Calu3 (cell line): ENCODE measurements at regions of chr14 and their contacts with region 1.

Region 1: GRCh38 chr14:98309591-98309990 is 962.4 kb downstream of the BCL11B start:
- DNase-seq: no peak
- H3K4me3 Mint-ChIP-seq: no peak overlapping the region
- H3K27ac Mint-ChIP-seq: no peak overlapping the region
- H3K4me1 Mint-ChIP-seq: no peaks in the 10 kb centered on the region
- H3K27me3 Mint-ChIP-seq: no peaks in the 10 kb centered on the region
- CTCF ChIP-seq: no peak

Region 2: GRCh38 chr14:98665007-98665406 is 355.4 kb after region 1 on chr14:
- CTCF ChIA-PET with region 1: interaction called, 16 read pairs
- intact Hi-C with region 1: no loop called
- DNase-seq: no peak
- H3K4me3 Mint-ChIP-seq: no peak overlapping the region
- H3K27ac Mint-ChIP-seq: no peak overlapping the region
- H3K4me1 Mint-ChIP-seq: no peaks in the 10 kb centered on the region
- H3K27me3 Mint-ChIP-seq: no peaks in the 10 kb centered on the region
- CTCF ChIP-seq: no peak